AG04449 (cell line): ENCODE measurements at regions of chr17 and their contacts with region 1.

Region 1: DNA sequence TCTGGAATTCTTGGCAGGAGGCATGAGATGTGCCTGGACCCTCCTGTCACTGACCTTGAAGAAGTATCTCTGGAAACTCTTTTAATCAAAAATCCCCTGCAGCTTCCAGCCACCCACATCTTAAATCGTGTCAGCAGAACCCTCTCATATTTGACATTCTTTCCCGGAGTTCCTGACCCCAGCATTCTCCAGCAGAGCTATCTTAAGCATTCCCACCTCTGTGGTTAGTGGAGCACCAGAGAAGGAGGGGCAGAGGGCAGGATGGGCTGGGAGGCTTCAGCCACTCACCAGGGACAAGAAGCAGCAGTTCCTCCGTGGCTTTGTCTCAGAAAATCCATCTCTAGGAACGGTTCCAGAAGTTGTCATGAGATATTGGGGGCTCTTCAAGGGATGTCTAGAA is 149.9 kb downstream of the RGS9 start:
- DNase-seq: no peak
- H3K4me3 ChIP-seq: no peak overlapping the region
- CTCF ChIP-seq: no peak

Region 2: DNA sequence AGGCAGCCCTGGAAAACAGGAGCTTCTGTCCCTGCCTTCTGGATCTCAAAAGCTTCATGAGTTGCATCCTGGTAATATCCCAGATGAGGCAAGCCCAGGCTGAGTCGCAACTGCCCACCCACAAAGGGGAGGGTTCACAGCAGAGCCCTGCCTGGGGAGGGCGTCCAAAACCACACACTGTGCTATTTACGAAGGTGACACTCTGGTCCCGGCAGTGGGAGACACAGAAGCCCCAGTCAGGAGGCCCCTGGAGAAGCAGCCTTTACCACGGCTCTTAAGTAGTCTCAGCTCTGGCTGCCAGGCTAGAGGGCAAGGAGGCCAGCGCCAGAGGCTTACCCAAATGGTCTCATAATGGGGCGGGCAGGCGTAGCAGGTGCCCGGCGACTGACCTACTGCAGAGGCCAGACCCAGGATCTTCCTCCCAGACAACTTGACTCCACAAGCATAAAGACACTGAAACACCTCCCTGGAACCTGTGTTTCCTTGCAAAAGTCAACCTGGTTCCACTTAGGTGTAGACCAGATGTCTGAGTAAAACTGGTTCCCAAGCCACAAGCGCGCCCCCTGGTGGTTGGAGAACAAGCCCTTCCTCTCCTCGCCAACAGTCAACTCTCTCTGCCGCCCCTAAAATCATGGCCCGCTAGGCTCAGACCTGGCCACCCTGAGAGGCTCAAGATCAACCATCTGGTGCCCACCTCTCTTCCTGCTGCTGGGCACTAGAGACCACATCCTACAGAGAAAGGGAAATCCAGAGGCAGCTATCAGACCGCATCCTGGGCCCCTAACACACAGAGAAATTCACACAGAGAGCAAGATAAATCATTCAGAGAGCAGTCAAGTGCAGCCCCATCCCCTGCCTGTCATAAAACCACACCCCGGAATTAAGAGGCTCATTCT is 269.2 kb after region 1 on chr17:
- CTCF ChIA-PET with region 1: interaction called, 14 read pairs
- POLR2A ChIA-PET with region 1: no interaction called
- DNase-seq: no peak
- H3K4me3 ChIP-seq: no peak overlapping the region
- CTCF ChIP-seq: peak; percentile 74